BJ (cell line): ENCODE measurements at regions of chr22 and their contacts with region 1.

Region 1: GRCh38 chr22:36781656-36782627 is 6.0 kb upstream of the IFT27 start:
- DNase-seq: no peak
- H3K4me3 ChIP-seq: no peak overlapping the region
- H3K27me3 ChIP-seq: peaks cover 18% of the 10 kb centered on the region
- CTCF ChIP-seq: peak; percentile 91

Region 2: DNA sequence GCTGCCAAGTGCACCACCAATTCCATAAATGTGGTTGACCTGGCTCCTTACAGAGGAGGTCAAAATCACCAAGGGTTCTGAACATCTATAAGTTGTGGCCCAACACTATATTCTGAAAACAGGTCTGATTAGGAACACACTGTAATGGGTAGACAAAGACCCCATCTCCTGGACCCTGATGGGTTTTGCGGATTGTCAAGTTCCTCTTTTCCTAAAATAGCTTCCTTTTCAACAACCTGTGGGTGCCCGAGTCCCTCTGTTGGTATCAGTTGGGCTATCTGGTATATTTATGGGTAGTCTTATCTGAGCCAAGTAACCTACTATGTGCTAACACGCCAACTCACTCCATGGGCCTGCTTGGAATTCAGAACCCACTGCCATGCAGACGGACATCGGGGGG is 68.5 kb before region 1 on chr22:
- CTCF ChIA-PET with region 1: no interaction called
- POLR2A ChIA-PET with region 1: no interaction called
- DNase-seq: no peak
- H3K4me3 ChIP-seq: no peak overlapping the region
- H3K27me3 ChIP-seq: peaks cover 8% of the 10 kb centered on the region
- CTCF ChIP-seq: no peak

Region 3: GRCh38 chr22:36765943-36766450 is 15.9 kb before region 1 on chr22:
- CTCF ChIA-PET with region 1: interaction called, 11 read pairs
- POLR2A ChIA-PET with region 1: no interaction called
- DNase-seq: no peak
- H3K4me3 ChIP-seq: no peak overlapping the region
- H3K27me3 ChIP-seq: no peaks in the 10 kb centered on the region
- CTCF ChIP-seq: no peak

Region 4: GRCh38 chr22:37210041-37210803 is 428.3 kb after region 1 on chr22:
- CTCF ChIA-PET with region 1: no interaction called
- POLR2A ChIA-PET with region 1: no interaction called
- DNase-seq: no peak
- H3K4me3 ChIP-seq: no peak overlapping the region
- H3K27me3 ChIP-seq: peaks cover 19% of the 10 kb centered on the region
- CTCF ChIP-seq: no peak